ENCODE measurements at regions of chr2 and their contacts with region 1.

Region 1: GRCh38 chr2:172655091-172655837 is 80.4 kb upstream of the RAPGEF4 start:
- DNase-seq: peak; percentile 72
- H3K4me3 ChIP-seq: no peak overlapping the region
- H3K27ac ChIP-seq: peak overlapping the region; percentile 93
- H3K27me3 ChIP-seq: no peaks in the 10 kb centered on the region
- CTCF ChIP-seq: no peak

Region 2: DNA sequence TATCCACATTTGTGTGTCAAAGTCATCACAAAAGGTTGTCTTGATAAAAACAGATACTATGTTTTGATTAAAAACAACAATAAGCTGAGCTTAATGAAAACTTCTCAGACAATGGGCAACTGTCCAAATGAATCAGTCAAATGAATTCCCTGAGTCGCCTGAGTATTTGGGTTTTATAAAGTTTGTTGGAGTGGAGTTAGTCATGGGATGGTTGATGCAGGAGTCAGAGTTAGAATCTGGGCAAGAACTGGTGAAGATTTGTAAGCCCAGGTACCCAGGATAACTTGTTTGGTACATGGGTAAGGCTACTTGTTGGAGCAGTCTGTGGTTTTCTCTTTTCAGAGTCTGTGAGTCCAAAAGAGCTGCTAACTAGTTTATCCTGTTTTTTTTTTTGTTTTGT is 46.0 kb after region 1 on chr2:
- CTCF ChIA-PET with region 1: no interaction called
- POLR2A ChIA-PET with region 1: interaction called, 10 read pairs
- DNase-seq: peak; percentile 36
- H3K4me3 ChIP-seq: no peak overlapping the region
- H3K27ac ChIP-seq: no peak overlapping the region
- H3K27me3 ChIP-seq: no peaks in the 10 kb centered on the region
- CTCF ChIP-seq: no peak

Region 3: DNA sequence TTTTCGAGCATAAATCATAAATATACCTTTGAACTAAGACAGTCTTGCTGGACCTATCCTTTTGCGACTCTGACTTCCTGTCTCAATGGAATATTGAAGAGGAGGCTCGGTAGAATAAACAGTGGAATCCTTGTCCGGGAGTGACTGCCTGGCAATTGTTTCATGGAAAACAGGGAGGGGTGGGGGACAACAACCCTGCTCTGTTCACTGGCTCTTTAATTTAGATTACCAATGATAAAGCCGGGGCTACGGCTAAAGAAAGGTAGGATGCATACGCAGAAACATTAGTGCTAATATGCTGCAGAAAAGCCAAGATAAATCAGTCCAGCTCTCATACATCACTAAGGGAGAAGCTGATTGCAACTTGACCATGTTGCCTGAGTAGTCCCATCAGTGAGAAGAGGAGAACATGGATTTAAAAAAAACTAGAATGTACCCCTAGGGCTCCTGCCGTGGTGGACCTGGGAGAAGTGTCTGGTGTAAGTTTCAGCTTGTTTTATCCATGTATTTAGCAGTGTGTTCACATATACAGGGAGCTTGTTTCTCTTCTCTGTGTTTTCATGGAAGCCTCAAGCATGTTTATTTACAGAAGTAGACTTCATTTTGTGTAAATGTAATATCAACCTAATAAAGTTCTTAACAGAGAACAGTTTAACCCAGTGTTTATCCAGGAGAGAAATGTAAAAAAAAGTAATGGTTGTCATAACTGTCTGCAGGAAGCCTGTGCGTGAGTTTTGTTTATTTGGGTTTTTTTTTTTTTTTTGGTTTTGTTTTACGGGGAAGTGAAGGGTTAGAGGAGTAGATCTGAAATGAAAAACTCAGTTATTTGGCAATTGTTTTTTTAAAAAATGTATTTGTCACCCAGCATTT is 204.8 kb after region 1 on chr2:
- CTCF ChIA-PET with region 1: no interaction called
- POLR2A ChIA-PET with region 1: no interaction called
- DNase-seq: no peak
- H3K4me3 ChIP-seq: no peak overlapping the region
- H3K27ac ChIP-seq: no peak overlapping the region
- H3K27me3 ChIP-seq: no peaks in the 10 kb centered on the region
- CTCF ChIP-seq: no peak

Measured in AG04450 (cell line).